Mammary epithelial cell (primary cell): ENCODE measurements at regions of chr5 and their contacts with region 1.

Region 1: DNA sequence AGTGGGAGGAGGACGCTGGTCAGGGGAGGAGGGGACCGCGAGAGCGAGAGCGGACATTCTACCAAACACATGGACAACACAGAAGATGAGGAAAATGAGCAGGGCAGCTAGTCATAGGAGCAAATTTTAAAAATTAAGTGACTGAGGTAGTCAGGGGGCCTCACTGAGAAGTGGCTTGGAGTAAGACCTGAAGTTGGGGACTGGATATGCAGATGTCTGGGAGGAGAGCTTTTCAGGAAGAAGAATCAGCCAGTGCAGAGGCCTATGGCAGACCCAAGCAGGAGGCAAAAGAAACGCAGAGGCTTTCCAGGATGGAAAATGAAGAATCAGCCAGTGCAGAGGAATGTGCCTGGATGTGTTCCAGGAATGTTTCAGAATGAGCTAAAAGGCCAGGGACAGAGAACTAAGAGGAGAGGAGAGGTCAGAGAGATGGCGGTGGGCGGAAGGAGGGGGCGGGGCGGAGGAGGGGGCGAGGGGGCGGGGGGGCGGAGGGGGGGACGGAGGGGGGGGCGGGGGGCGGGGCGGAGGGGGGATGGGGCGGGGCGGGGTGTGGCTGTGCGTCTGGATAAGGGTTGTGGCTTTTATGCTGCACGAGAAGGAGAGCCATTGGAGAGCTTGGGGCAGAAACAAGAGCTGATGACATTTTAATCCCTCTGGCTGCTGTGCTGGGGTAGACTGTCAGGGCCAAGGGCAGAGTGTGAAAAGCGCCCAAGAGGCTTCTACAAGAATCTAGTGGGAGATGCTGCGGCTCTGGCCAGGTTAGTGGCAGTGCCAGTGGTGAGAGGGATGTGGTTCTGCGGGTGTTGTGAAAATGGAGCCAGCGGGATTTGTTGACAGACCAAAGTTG is 129.6 kb downstream of the KCNIP1 start:
- DNase-seq: peak; percentile 27
- H3K4me3 ChIP-seq: peak overlapping the region in 1 of 3 experiments; percentile 39
- H3K27ac ChIP-seq: no peak overlapping the region
- H3K4me1 ChIP-seq: peaks cover 15% of the 10 kb centered on the region
- H3K27me3 ChIP-seq: no peaks in the 10 kb centered on the region
- CTCF ChIP-seq: no peak

Region 2: DNA sequence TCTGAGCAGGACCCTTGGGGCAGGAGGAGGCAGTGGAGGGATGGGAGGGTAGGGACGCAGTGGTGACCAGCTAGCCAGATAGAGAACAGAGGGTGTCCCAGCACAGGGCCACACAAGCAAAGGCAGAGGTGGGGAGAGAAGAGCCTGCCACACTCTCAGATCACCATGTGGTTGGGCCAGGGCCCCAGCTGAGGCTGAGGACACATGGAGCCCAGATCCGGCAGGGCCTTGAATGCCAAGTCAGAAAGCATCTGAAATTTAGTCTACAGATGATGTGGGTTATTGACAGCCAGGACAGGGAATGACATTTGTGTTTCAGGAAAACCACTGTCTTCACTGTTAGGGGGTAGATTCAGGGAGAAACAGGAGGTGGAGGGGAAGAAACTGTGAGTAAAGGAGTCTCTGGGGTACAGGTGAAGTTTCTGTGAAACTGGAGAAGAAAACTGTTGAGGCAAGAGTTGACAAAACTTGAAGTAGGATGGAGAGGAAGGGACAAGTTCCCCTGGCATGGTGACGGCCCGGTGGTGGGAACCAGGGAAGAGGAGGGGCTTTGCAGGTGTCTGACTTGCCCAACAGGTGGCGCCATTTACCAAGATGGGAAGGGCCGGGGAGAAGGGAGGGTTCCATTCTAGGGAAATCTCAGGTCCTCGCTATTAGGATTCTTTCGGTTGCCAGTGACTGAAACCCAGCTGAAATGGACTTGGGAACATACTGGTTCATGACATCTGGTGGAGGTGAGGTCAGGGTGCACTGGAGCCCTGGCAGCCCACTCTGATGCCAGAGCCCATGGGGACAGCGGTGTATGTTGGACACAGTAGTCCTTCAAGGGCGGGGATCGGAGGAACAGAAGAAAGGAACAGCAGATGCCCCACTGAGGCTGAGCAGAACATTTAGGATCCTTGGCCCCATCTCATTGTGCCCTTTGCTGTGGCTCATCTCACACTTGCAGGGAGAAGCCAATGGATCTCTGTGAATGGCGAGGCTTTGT is 29.6 kb before region 1 on chr5:
- CTCF ChIA-PET with region 1: interaction called, 3 read pairs
- dilution Hi-C with region 1: no loop called
- in situ Hi-C with region 1: no loop called
- intact Hi-C with region 1: loop called (anchors 2 kb)
- DNase-seq: peak; percentile 24
- H3K4me3 ChIP-seq: no peak overlapping the region
- H3K27ac ChIP-seq: no peak overlapping the region
- H3K4me1 ChIP-seq: no peaks in the 10 kb centered on the region
- H3K27me3 ChIP-seq: peaks cover 2% of the 10 kb centered on the region
- CTCF ChIP-seq: peak; percentile 59 to 78

Region 3: DNA sequence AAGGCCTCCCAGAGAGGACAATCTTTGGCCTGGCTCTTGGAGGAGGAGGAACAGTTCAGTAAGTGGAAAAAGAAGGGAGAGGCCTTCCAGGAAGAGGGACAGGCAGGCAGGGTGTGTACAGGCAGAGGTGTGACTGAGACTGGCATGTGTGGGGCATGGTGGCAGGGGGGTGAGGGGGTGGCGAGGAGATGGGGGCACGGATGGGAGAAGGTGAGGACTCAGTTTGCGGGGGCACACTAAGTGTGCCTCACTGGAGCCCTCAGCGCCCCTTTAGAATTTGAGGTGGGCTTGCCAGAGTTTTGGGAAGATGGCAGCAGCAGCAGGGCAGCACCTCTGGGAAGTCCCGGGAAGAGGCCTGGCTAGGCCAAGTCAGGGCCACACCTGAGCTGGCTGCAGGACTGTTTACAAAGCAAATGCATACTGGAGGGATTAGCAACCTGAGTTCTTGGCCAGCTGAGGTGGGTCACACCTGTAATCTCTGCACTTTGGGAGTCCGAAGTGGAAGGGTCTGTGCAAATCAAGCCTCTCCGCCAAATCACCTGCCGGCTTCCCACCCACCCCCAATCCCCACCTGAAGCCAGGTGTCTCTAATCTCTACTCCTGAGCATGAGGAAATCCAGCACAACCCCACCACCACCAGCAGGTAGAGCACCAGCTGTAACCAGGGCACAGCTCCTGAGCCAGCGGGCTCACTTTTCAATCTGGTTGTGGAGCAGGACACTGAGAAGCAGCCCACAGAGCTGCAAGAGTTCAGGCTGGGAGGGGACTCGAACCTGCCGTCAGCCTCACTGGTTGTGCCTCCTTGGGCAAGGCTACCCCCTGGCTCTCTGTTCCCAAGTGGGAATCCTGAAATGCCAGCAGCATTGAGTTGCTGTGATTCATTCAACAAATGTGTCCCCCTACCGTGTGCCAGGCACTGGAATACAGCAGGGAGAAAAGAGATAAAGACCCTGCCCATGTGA is 139.8 kb after region 1 on chr5:
- CTCF ChIA-PET with region 1: no interaction called
- dilution Hi-C with region 1: no loop called
- in situ Hi-C with region 1: no loop called
- intact Hi-C with region 1: no loop called
- DNase-seq: no peak
- H3K4me3 ChIP-seq: no peak overlapping the region
- H3K27ac ChIP-seq: no peak overlapping the region
- H3K4me1 ChIP-seq: no peaks in the 10 kb centered on the region
- H3K27me3 ChIP-seq: no peaks in the 10 kb centered on the region
- CTCF ChIP-seq: no peak

Region 4: GRCh38 chr5:170836226-170836625 is 202.8 kb after region 1 on chr5:
- CTCF ChIA-PET with region 1: no interaction called
- dilution Hi-C with region 1: no loop called
- in situ Hi-C with region 1: no loop called
- intact Hi-C with region 1: no loop called
- DNase-seq: no peak
- H3K4me3 ChIP-seq: no peak overlapping the region
- H3K27ac ChIP-seq: no peak overlapping the region
- H3K4me1 ChIP-seq: no peaks in the 10 kb centered on the region
- H3K27me3 ChIP-seq: no peaks in the 10 kb centered on the region
- CTCF ChIP-seq: no peak